PC-3 (cell line): ENCODE measurements at regions of chr20 and their contacts with region 1.

Region 1: GRCh38 chr20:31849455-31849925 is 4.1 kb upstream of the FOXS1 start:
- DNase-seq: peak; percentile 4
- ATAC-seq: peak; percentile 9; the same call in 1 of the 2 replicates
- H3K4me3 ChIP-seq: no peak overlapping the region
- H3K27ac ChIP-seq: no peak overlapping the region
- H3K4me1 ChIP-seq: 0 out of 2 replicates have a peak, but pooled peaks cover 3% of the 10 kb centered on the region
- H3K27me3 ChIP-seq: peaks cover 13% of the 10 kb centered on the region
- CTCF ChIP-seq: no peak

Region 2: GRCh38 chr20:32031007-32031958 is 181.8 kb after region 1 on chr20:
- CTCF ChIA-PET with region 1: interaction called, 6 read pairs
- POLR2A ChIA-PET with region 1: no interaction called
- intact Hi-C with region 1: loop called (anchors 1 kb)
- DNase-seq: peak; percentile 84
- ATAC-seq: peak; percentile 99
- H3K4me3 ChIP-seq: no peak overlapping the region; the same call in 1 of the 2 replicates
- H3K27ac ChIP-seq: no peak overlapping the region
- H3K4me1 ChIP-seq: no peaks in the 10 kb centered on the region
- H3K27me3 ChIP-seq: peaks cover 47% of the 10 kb centered on the region
- CTCF ChIP-seq: peak; percentile 94

Region 3: DNA sequence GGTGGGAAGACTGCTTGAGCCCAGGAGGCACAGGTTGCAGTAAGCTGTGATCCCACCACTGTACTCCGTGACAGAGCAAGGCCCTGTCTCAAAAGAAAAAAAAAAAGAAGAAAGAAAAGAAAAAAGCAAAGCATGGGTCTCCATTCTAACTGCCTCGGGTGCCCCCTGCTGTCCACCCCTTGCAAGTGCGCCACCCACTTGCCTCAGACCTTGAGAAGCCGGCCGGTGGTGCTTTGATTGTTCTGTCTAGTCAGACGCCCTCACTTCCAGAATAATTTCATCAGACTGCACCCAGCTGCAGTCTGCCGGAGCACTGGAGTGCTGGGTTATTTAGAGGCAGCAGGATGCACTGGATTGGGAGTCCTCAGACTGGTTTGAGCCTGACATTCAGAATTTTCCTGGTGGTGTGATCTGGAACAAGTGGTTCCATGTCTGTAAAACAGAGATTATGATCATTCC is 242.4 kb after region 1 on chr20:
- CTCF ChIA-PET with region 1: no interaction called
- POLR2A ChIA-PET with region 1: no interaction called
- intact Hi-C with region 1: loop called (anchors 2 kb)
- DNase-seq: peak; percentile 81
- ATAC-seq: peak; percentile 91
- H3K4me3 ChIP-seq: no peak overlapping the region
- H3K27ac ChIP-seq: no peak overlapping the region
- H3K4me1 ChIP-seq: no peaks in the 10 kb centered on the region
- H3K27me3 ChIP-seq: peaks cover 18% of the 10 kb centered on the region
- CTCF ChIP-seq: peak; percentile 91